A549 (cell line): ENCODE measurements at regions of chr19 and their contacts with region 1.

Region 1: DNA sequence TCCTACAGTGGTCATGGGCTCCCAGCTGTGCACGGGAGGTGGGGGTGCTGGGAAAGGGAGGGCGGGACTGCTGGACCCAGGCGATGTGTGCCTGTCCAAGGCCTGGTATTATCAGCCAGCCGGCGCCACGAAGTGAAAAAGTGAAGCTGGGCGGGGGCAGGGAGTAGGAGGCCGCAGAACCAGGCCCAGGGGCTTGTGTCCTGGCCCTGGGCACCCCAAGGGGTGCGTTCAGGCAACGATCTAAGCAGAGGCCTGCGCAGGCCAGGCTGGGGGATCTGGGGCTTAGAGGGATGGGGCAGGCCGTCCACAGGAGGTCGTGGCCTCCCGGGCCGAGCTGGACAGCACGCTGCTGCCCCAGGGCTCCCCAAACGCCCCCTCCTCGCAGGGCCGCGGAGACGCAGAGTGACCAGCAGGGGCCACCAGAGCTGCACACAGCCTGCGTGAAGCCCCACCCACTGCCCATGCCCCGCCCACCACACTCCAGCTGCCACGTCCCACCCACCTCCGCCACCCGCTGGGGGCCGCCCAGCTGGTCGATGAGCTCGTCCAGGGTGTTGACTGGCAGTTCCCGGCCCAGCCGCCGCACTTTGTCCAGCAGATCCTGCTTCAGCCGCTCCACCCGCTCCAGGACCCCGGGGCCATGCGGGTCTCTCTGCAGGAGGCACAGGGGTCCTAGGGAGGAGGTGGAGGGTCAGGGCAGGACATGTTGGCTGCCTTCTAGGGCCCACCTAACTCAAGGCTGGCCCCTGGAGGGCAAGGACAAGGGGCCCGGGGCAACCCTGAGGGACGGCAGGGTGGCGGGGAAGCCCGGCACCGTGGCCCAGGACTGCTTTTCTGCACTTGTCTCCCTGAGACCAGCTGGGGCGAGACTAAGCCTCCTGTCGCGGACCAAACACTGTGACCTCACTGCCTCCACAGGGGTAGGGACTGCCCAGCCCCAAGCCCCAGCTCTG is 9.5 kb downstream of the GPX4 start:
- DNase-seq: peak; percentile 72 to 91
- ATAC-seq: peak; percentile 42 to 74
- H3K4me3 ChIP-seq: no peak overlapping the region
- H3K27ac ChIP-seq: peak overlapping the region; percentile 55 to 84; a peak in 5 of 6 replicates
- H3K4me1 ChIP-seq: peaks cover 26% of the 10 kb centered on the region
- CTCF ChIP-seq: peak; percentile 70
- EP300 ChIP-seq: no peak
- POLR2A ChIP-seq: no peak
- RAD21 ChIP-seq: peak; percentile 66 to 88

Region 2: DNA sequence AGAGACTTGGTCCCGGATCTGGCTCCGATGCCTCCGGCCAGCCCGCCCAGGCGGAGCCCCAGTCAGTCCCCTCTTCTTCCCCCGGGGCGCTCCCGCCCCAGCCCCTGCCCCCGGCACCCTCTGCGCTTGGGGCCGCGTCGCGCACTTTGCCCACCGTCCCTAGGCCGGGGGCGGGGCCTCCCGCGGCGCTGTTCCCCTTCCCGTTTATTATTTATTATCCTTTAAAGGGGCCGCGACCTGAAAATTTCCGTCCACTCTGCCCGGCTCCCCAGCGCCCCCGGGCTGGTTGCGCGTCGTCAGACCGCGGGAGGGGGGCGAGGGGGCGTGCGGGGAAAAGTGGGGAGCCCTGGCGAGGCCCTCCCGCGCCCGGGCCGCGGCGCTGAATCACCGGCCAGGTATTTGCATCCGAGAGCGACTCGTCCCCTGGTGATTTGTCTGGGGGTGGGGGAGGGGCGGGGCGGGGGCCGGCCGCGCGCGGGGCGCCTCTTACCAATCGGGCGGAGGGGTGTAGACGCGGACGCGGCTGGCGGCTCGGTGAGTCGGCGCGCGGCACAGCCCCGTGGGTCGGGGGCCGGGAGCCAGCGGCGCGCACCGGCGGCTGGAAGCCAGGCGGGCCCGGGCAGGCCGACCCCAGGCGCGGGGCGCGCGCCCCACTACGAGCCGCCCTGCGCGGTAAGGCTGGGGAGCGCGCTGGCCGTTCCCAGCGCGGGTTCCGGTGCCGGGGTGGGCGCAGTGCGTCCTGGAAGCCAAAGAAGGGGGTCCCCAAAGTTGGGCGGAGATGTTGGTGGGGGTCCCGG is 187.6 kb before region 1 on chr19 and contains the start of gene ARID3A:
- CTCF ChIA-PET with region 1: no interaction called
- POLR2A ChIA-PET with region 1: no interaction called
- DNase-seq: peak; percentile 71 to 77
- ATAC-seq: peak; percentile 62 to 73
- H3K4me3 ChIP-seq: peak within 1 kb of the TSS; percentile 91
- H3K27ac ChIP-seq: peak within 1 kb of the TSS; percentile 99 to 100
- H3K4me1 ChIP-seq: peaks cover 21% of the 10 kb centered on the region; the same call in 2 of the 3 replicates
- CTCF ChIP-seq: no peak
- EP300 ChIP-seq: no peak
- POLR2A ChIP-seq: no peak
- RAD21 ChIP-seq: no peak
- polyA plus RNA-seq, gene ARID3A: 3.3 and 3.4 TPM in 2 replicates

Region 3: DNA sequence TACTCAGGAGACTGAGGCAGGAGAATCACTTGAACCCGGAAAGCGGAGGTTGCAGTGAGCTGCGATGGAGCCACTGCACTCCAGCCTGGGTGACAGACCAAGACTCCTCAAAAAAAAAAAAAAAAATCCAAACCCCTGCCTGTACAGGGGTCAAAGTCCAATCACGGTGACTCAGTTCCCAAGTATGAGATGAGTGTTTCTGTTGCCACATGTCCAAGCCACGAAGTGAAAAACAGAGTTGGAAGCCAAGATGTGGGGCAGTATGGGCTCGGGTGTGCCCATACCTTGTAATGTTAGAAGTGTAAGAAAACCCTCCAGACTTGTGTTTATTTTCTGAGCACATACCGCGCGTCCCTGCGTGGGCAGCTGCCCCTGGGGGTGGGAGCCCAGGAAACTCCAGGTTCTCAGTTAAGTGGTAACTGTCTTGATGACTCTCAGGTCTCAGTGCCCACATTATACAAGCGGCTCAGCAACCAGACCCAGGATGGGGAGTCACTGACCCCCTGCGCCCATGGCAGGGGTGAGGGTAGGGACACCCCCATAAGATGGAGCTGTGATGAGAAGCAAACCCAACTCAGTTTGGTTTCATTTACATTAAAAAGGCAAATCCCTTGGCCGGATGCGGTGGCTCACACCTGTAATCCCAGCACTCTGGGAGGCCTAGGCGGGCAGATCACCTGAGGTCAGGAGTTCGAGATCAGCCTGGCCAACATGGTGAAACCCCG is 10.7 kb before region 1 on chr19:
- CTCF ChIA-PET with region 1: interaction called, 14 read pairs
- POLR2A ChIA-PET with region 1: interaction called, 4 read pairs
- DNase-seq: peak in 1 of 2 experiments; percentile 94
- ATAC-seq: peak; percentile 15 to 31; a peak in 5 of 6 replicates
- H3K4me3 ChIP-seq: no peak overlapping the region; the same call in 1 of the 3 replicates
- H3K27ac ChIP-seq: peak overlapping the region; percentile 90 to 92
- H3K4me1 ChIP-seq: peaks cover 65% of the 10 kb centered on the region
- CTCF ChIP-seq: no peak
- EP300 ChIP-seq: no peak; a peak in 1 of 5 replicates
- POLR2A ChIP-seq: no peak
- RAD21 ChIP-seq: no peak

Region 4: DNA sequence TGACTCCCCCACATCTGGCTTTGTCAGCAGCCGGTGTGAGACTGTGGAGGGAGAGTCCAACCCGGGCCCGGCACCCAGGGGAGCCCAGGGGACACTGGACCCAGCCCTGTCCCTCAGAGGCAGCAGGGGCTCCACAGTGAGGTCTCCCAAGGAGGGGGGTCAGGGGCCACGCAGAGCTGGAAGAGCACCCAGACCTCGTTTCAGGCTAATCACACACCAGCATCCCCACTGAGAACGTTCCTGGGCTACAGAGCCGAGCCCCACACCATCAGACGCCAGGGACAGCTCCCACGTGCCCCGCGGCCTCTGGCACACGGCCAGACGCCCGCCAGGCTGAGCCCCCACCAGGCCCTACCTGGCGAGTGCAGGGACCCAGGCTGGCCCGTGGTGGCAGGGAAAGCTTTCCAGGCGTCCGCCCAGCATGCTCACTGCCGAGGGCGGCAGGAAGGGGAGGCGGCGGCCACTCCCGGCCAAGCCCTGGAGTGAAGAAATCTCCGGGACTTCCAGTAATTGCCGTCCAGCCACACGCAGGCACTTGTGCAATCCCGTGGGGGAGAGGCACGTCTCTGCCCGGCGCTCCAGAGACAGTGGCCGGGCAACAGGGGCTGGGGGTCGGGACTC is 41.5 kb after region 1 on chr19:
- CTCF ChIA-PET with region 1: interaction called, 12 read pairs
- POLR2A ChIA-PET with region 1: no interaction called
- DNase-seq: peak; percentile 58 to 84
- ATAC-seq: peak; percentile 73 to 78
- H3K4me3 ChIP-seq: peak overlapping the region; percentile 23; the same call in 1 of the 3 replicates
- H3K27ac ChIP-seq: peak overlapping the region; percentile 90 to 98
- H3K4me1 ChIP-seq: peaks cover 35% of the 10 kb centered on the region
- CTCF ChIP-seq: no peak
- EP300 ChIP-seq: peak; percentile 41 to 86; a peak in 4 of 5 replicates
- POLR2A ChIP-seq: no peak
- RAD21 ChIP-seq: no peak; a peak in 1 of 5 replicates

Region 5: GRCh38 chr19:1183534-1184172 is 70.3 kb after region 1 on chr19:
- CTCF ChIA-PET with region 1: interaction called, 28 read pairs
- POLR2A ChIA-PET with region 1: no interaction called
- DNase-seq: peak; percentile 81 to 92
- ATAC-seq: peak; percentile 82 to 89
- H3K4me3 ChIP-seq: no peak overlapping the region
- H3K27ac ChIP-seq: peak overlapping the region; percentile 100
- H3K4me1 ChIP-seq: peaks cover 68% of the 10 kb centered on the region
- CTCF ChIP-seq: no peak
- EP300 ChIP-seq: peak; percentile 44 to 67; a peak in 1 of 5 replicates
- POLR2A ChIP-seq: no peak
- RAD21 ChIP-seq: no peak

Region 6: GRCh38 chr19:1205114-1206062 is 92.1 kb after region 1 on chr19 and contains the start of gene STK11:
- CTCF ChIA-PET with region 1: interaction called, 28 read pairs
- POLR2A ChIA-PET with region 1: no interaction called
- DNase-seq: peak; percentile 94 to 95
- ATAC-seq: peak; percentile 97
- H3K4me3 ChIP-seq: peak within 1 kb of the TSS; percentile 97
- H3K27ac ChIP-seq: peak within 1 kb of the TSS; percentile 95 to 100
- H3K4me1 ChIP-seq: peaks cover 24% of the 10 kb centered on the region
- CTCF ChIP-seq: no peak
- EP300 ChIP-seq: no peak
- POLR2A ChIP-seq: peak; percentile 20
- RAD21 ChIP-seq: no peak
- polyA plus RNA-seq, gene STK11: 12.2 and 16.2 TPM in 2 replicates

Region 7: GRCh38 chr19:1568320-1569019 is 455.2 kb after region 1 on chr19 and contains the start of gene MEX3D:
- CTCF ChIA-PET with region 1: no interaction called
- POLR2A ChIA-PET with region 1: no interaction called
- DNase-seq: peak; percentile 62 to 67
- ATAC-seq: peak; percentile 49 to 51
- H3K4me3 ChIP-seq: peak within 1 kb of the TSS; percentile 76
- H3K27ac ChIP-seq: peak within 1 kb of the TSS; percentile 82 to 92
- H3K4me1 ChIP-seq: peaks cover 4% of the 10 kb centered on the region; the same call in 1 of the 3 replicates
- CTCF ChIP-seq: no peak
- EP300 ChIP-seq: no peak
- POLR2A ChIP-seq: 0 out of 2 replicates have a peak, but pooled peaks have one; percentile 21
- RAD21 ChIP-seq: no peak
- polyA plus RNA-seq, gene MEX3D: 1.4 and 2.1 TPM in 2 replicates